Panc1 (cell line): ENCODE measurements at regions of chr17 and their contacts with region 1.

Region 1: GRCh38 chr17:2386400-2387085 is 14.3 kb downstream of the MNT start:
- DNase-seq: no peak
- ATAC-seq: no peak
- H3K4me3 ChIP-seq: no peak overlapping the region
- H3K27ac ChIP-seq: no peak overlapping the region
- H3K4me1 ChIP-seq: peaks cover 14% of the 10 kb centered on the region
- H3K27me3 ChIP-seq: no peaks in the 10 kb centered on the region
- CTCF ChIP-seq: no peak

Region 2: DNA sequence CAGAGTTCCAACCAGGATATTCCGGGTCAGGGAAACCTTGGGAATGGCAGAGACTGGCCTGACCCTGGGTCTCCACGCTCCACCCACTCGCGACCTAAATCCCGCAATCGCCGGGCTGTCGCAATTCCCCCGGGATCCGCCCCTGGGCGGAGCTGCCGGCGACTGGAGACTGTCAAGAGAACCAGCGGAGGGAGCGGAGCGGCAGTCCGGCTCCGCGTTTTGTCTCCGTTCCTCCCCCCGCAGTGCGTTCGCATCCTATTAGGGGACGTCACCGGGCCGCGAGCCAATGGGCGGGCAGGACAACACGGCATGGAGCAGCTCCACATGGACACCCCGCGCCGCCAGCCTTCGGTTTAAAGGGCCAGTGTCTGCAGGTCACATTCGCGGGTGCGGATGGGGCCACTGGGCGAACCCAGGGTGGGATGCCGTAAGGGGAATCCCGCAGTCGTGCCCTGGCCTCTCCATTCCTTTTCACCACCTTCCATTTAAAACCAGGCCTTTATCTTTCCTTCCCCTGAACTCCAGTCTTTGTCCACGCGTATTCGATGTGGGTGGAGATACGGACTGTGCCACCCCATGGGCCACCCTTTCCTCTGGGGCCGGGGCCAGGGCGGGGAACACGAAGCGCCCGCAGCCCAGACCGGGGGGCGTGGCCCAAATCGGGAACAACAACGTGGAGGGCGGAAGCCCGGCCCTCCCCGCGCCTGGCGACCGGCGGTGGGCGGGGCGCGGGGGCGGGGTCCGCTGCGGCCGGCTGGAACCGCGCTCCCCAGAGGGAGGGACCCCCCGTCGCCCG is 15.1 kb after region 1 on chr17:
- CTCF ChIA-PET with region 1: interaction called, 15 read pairs
- POLR2A ChIA-PET with region 1: interaction called, 8 read pairs
- in situ Hi-C with region 1: no loop called
- intact Hi-C with region 1: no loop called
- DNase-seq: peak; percentile 94
- ATAC-seq: peak; percentile 75
- H3K4me3 ChIP-seq: peak overlapping the region; percentile 64 to 89
- H3K27ac ChIP-seq: peak overlapping the region; percentile 84
- H3K4me1 ChIP-seq: peaks cover 16% of the 10 kb centered on the region
- H3K27me3 ChIP-seq: no peaks in the 10 kb centered on the region
- CTCF ChIP-seq: no peak

Region 3: GRCh38 chr17:2416010-2416734 is 29.6 kb after region 1 on chr17:
- CTCF ChIA-PET with region 1: interaction called, 58 read pairs
- POLR2A ChIA-PET with region 1: interaction called, 5 read pairs
- in situ Hi-C with region 1: no loop called
- intact Hi-C with region 1: loop called (anchors 1 kb)
- DNase-seq: no peak
- ATAC-seq: peak; percentile 88
- H3K4me3 ChIP-seq: no peak overlapping the region
- H3K27ac ChIP-seq: no peak overlapping the region
- H3K4me1 ChIP-seq: no peaks in the 10 kb centered on the region
- H3K27me3 ChIP-seq: no peaks in the 10 kb centered on the region
- CTCF ChIP-seq: peak; percentile 95

Region 4: DNA sequence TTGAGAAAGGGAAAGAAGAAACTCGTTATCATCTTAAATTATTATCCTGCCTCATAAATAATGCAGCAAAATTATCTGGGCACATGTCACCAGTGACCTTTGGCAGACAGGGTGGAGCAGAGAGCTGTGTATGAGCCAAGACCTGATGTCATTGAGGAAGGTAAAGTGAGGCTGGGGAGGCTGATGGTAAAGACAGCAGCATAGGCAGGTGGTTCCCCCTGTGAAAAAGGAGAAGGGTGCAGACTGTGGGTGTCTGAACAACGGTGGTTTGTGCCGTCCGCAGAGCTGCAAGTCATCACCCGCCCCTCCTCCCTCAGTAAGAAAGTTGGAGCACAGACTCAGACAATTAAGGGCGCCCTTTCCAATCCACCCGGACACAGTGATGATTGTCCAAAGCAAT is 155.9 kb after region 1 on chr17:
- CTCF ChIA-PET with region 1: no interaction called
- POLR2A ChIA-PET with region 1: no interaction called
- in situ Hi-C with region 1: no loop called
- intact Hi-C with region 1: no loop called
- DNase-seq: no peak
- ATAC-seq: no peak
- H3K4me3 ChIP-seq: no peak overlapping the region
- H3K27ac ChIP-seq: no peak overlapping the region
- H3K4me1 ChIP-seq: no peaks in the 10 kb centered on the region
- H3K27me3 ChIP-seq: no peaks in the 10 kb centered on the region
- CTCF ChIP-seq: no peak

Region 5: DNA sequence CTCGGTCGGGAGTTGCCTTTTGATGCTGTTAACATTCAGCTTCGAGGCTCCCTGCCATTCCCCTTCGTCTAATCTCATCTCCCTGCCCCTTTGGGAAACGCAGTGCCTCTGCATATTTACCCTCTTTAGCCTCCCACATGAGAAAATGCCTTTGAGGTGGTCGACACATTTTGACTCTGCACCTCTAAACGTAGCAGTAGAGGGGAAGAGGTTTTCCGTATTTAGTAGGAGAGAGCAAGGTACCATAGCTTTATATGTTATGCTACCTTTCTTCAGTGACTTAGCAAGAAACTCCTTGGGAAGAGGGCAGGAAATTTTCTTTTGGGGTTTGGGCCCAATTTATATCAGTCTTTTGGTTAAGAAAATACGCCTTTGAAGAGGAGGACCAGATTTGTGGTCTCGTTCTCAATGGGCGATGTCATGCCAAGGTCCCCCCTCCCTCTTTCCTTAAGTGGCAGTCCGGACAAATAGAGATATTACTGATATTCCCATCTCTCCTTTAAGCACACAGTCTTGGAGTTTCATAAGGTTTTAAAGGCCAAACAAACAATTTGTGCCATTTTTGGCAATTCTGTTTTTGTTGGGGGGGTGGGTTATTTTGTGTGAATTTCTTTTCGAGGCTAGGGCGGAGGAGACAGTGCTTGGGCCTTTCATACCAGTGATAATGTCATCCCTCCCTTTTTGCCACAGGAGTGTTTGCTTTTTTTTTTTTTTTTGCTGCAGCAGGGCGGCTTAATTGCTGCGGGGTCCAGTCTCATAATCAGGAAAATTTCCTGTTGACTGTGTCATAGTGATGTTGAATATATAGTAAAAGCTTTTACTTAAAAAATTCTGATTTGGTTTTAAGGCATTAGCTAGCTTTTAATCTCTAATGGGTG is 208.4 kb after region 1 on chr17:
- CTCF ChIA-PET with region 1: interaction called, 12 read pairs
- POLR2A ChIA-PET with region 1: no interaction called
- in situ Hi-C with region 1: no loop called
- intact Hi-C with region 1: no loop called
- DNase-seq: no peak
- ATAC-seq: no peak
- H3K4me3 ChIP-seq: peak overlapping the region; percentile 84 to 93
- H3K27ac ChIP-seq: peak overlapping the region; percentile 88
- H3K4me1 ChIP-seq: peaks cover 23% of the 10 kb centered on the region
- H3K27me3 ChIP-seq: no peaks in the 10 kb centered on the region
- CTCF ChIP-seq: no peak

Region 6: DNA sequence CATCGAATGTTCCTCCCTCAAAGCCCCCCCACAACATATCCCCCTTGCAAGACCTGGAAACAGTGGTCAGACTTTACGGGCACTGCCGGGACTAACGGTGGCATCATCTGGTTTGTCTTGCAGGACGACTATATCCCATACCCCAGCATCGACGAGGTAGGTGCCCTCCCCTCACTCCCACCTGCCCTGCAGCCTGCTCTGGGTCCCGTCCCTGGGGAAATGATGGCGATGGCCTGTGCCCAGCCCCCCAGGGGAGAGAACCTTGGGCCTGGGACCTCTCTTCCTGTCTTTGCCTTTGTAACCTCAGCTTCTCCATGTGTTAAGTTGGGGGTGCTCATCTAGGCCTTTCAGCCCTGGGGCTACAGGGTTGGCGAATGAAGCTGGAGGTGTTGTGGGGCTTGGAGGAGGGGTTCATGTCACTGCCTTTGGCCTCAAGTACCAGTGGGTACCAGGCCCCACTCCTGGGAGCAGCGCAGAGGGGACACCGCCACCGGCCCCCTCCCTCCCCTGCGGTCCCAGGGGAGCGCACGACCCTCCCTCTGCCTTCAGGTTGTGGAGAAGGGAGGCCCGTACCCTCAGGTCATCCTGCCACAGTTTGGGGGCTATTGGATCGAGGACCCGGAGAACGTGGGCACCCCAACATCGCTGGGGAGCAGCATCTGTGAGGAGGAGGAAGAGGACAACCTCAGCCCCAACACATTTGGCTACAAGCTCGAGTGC is 576.9 kb after region 1 on chr17:
- CTCF ChIA-PET with region 1: interaction called, 13 read pairs
- POLR2A ChIA-PET with region 1: no interaction called
- in situ Hi-C with region 1: no loop called
- intact Hi-C with region 1: no loop called
- DNase-seq: no peak
- ATAC-seq: no peak
- H3K4me3 ChIP-seq: no peak overlapping the region
- H3K27ac ChIP-seq: no peak overlapping the region
- H3K4me1 ChIP-seq: peaks cover 30% of the 10 kb centered on the region
- H3K27me3 ChIP-seq: no peaks in the 10 kb centered on the region
- CTCF ChIP-seq: no peak